GM18951 (cell line): ENCODE measurements at regions of chr1 and their contacts with region 1.

Region 1: GRCh38 chr1:152623203-152623844 is 421 bp upstream of the LCE3A start:
- POLR2A ChIP-seq: no peak

Region 2: GRCh38 chr1:152582647-152583046 is 40.7 kb before region 1 on chr1:
- in situ Hi-C with region 1: loop called (anchors 5 kb)
- POLR2A ChIP-seq: no peak